CD4-positive, alpha-beta T cell (primary cell): ENCODE measurements at regions of chr1 and their contacts with region 1.

Region 1: GRCh38 chr1:155038602-155039307 is 5.1 kb downstream of the DCST1 start:
- DNase-seq: no peak
- ATAC-seq: no peak
- H3K4me3 ChIP-seq: no peak overlapping the region
- H3K4me3 Mint-ChIP-seq: no peak overlapping the region
- H3K27ac ChIP-seq: no peak overlapping the region
- H3K27ac Mint-ChIP-seq: no peak overlapping the region
- H3K4me1 ChIP-seq: no peaks in the 10 kb centered on the region
- H3K4me1 Mint-ChIP-seq: no peaks in the 10 kb centered on the region
- H3K27me3 ChIP-seq: no peaks in the 10 kb centered on the region
- H3K27me3 Mint-ChIP-seq: no peaks in the 10 kb centered on the region
- CTCF ChIP-seq: no peak

Region 2: DNA sequence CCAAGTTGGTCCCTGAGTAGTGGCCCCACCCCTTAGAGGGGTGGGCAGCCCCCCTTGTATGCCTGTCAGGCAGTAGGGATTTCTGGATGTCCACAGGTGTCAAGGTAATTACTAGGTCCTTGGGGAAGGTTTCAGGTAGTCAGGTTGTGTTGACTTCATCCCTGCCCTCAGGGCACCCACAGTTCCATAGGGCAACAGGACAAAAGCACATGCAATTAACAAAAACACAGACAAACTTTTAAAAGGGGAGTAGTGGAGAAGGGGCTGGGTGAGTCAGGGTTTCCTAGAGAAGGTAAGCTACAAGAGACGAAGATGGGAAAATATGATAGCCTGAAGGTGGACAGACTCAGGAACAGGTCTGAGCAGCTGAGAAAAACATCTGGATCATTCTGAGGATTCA is 120.2 kb after region 1 on chr1:
- CTCF ChIA-PET with region 1: no interaction called
- POLR2A ChIA-PET with region 1: no interaction called
- intact Hi-C with region 1: loop called in 1 of 2 experiments (anchors 10 kb)
- DNase-seq: no peak
- ATAC-seq: no peak
- H3K4me3 ChIP-seq: no peak overlapping the region
- H3K4me3 Mint-ChIP-seq: no peak overlapping the region
- H3K27ac ChIP-seq: no peak overlapping the region
- H3K27ac Mint-ChIP-seq: no peak overlapping the region
- H3K4me1 ChIP-seq: no peaks in the 10 kb centered on the region
- H3K4me1 Mint-ChIP-seq: no peaks in the 10 kb centered on the region
- H3K27me3 ChIP-seq: no peaks in the 10 kb centered on the region
- H3K27me3 Mint-ChIP-seq: no peaks in the 10 kb centered on the region
- CTCF ChIP-seq: no peak